ENCODE measurements at regions of chr3 and their contacts with region 1.

Region 1: DNA sequence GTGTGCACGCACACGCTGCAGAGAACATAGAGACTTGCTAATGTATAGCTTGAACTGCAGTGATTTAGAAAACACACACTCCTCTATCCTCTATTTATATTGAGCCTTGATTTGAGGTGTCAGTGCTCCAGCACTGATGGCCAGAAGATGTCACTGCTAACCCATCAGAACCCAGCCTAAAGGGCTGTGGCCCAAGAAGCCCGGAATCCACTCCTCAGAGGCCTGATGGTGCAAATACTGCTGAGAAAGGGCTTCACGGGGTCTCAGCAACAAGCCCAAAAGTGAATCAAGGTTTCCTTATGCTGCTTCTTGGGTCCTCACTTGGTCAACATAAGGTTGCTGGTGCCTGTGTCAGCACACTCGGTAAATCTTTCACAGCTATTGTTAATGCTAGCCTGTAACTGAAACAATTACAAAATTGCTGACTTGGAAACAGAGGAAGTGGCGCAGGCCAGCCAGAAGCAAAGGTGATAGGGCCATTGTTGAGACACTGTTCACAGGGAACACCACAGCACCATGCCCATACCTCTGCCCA is 60.3 kb downstream of the HEG1 start:
- DNase-seq: peak; percentile 51 to 81
- ATAC-seq: peak; percentile 90 to 98 (median 97)
- H3K4me3 ChIP-seq: no peak overlapping the region
- H3K4me3 Mint-ChIP-seq: no peak overlapping the region
- H3K27ac ChIP-seq: peak overlapping the region; percentile 42
- H3K27ac Mint-ChIP-seq: peak overlapping the region; percentile 69 to 83
- H3K4me1 ChIP-seq: peaks cover 12% of the 10 kb centered on the region
- H3K4me1 Mint-ChIP-seq: peaks cover 11 to 17% of the 10 kb centered on the region in 2 donors
- H3K27me3 ChIP-seq: no peaks in the 10 kb centered on the region
- H3K27me3 Mint-ChIP-seq: no peaks in the 10 kb centered on the region
- CTCF ChIP-seq: peak; percentile 75

Region 2: DNA sequence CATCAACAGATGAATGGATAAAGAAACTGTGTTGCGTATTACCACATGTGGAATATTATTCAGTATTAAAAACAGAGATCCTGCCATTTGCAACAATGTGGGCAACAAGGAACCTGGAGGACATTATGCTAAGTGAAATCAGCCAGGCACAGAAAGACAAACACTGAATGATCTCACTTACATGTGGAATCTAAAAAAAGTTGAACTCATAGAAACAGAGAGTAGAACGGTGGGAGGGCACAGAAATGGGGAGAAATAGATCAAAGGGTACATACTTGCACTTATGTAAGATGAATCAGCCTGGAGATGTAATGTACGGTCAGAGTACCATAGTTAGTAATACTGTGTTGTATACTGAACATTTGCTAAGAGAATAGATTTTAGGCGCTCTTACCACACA is 31.1 kb before region 1 on chr3:
- intact Hi-C with region 1: no loop called
- DNase-seq: no peak
- ATAC-seq: no peak
- H3K4me3 ChIP-seq: no peak overlapping the region
- H3K4me3 Mint-ChIP-seq: no peak overlapping the region
- H3K27ac ChIP-seq: no peak overlapping the region
- H3K27ac Mint-ChIP-seq: peak overlapping the region in 1 of 2 donors; percentile 5
- H3K4me1 ChIP-seq: no peaks in the 10 kb centered on the region
- H3K4me1 Mint-ChIP-seq: peaks cover 0 to 8% of the 10 kb centered on the region in 2 donors
- H3K27me3 ChIP-seq: no peaks in the 10 kb centered on the region
- H3K27me3 Mint-ChIP-seq: no peaks in the 10 kb centered on the region
- CTCF ChIP-seq: no peak

Region 3: DNA sequence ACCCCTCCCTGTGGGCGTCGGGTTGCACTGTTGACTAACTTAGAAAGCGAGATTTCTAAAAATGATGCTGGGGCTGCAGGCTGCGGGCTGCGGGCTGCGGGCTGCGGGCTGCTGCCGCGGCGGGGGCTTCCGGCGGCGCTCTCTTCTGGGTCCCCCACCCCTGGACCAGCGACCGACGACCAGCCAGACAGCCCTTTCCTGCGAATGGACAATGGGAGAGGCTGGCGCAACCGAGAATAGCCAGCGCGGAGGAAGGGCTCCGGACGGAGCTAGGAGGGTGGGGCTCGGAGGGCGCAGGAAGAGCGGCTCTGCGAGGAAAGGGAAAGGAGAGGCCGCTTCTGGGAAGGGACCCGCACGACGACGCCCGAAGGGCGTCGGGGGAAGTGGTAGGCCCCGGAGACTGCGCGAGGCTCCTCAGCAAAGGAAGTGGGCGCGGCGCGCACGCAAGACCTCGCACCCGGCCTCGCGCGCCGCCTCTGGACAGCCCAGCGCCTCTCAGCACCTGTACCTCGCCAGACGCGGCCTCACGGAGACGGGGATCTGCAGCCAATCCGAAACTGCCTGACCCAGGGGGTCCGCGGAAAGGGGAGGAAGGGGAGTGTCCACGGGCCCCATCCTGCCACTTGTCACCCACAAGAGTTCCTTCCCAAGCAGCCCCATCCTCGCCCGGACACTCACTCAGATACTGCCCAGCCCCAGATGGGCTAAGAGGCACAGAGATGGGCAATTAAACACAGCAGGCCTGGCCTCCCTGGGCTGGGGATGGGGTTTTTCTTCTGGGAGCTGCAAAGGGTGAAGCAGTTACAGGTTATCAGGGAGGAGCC is 146.3 kb after region 1 on chr3:
- intact Hi-C with region 1: loop called (anchors 1 kb)
- DNase-seq: peak; percentile 61 to 86
- ATAC-seq: peak; percentile 87 to 91 (median 91)
- H3K4me3 ChIP-seq: peak overlapping the region; percentile 29
- H3K4me3 Mint-ChIP-seq: peak overlapping the region; percentile 86
- H3K27ac ChIP-seq: peak overlapping the region; percentile 59
- H3K27ac Mint-ChIP-seq: peak overlapping the region; percentile 84 to 95
- H3K4me1 ChIP-seq: peaks cover 57% of the 10 kb centered on the region
- H3K4me1 Mint-ChIP-seq: peaks cover 46 to 66% of the 10 kb centered on the region in 2 donors
- H3K27me3 ChIP-seq: no peaks in the 10 kb centered on the region
- H3K27me3 Mint-ChIP-seq: no peaks in the 10 kb centered on the region
- CTCF ChIP-seq: peak; percentile 6

Region 4: GRCh38 chr3:125202197-125202596 is 206.7 kb after region 1 on chr3:
- intact Hi-C with region 1: loop called (anchors 1 kb)
- DNase-seq: peak in 1 of 2 donors; percentile 46
- ATAC-seq: peak in 2 of 3 donors; percentile 69 to 77
- H3K4me3 ChIP-seq: no peak overlapping the region
- H3K4me3 Mint-ChIP-seq: no peak overlapping the region
- H3K27ac ChIP-seq: no peak overlapping the region
- H3K27ac Mint-ChIP-seq: no peak overlapping the region
- H3K4me1 ChIP-seq: no peaks in the 10 kb centered on the region
- H3K4me1 Mint-ChIP-seq: no peaks in the 10 kb centered on the region
- H3K27me3 ChIP-seq: no peaks in the 10 kb centered on the region
- H3K27me3 Mint-ChIP-seq: no peaks in the 10 kb centered on the region
- CTCF ChIP-seq: peak; percentile 16

Region 5: DNA sequence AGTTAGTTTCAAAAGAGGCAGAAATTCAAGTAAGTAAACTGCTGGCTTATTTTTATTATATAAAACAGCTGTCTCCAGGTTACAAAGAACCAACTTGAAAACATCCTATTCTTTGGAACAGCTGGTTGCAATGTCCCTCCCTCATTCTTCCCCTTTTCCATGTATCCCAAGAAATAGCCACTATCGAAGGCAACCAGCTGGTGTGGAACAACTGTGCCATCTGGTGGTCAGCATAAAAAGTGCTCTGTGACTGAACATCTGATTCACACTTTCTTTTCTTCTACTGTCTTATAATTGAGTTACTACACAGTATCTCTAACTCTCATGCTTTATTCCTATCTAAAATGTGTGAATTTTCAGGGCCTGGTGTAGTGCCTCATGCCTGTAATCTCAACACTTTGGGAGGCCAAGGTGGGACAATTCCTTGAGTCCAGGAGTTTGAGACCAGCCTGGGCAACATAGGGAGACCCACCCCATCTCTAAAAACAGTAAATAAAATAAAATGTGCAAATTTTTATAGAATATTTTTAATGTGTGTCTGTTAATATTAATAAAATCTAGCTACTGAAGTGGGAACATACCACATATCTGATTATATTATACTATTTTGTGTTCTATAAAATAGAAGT is 590.2 kb after region 1 on chr3:
- intact Hi-C with region 1: loop called (anchors 2 kb)
- DNase-seq: peak in 1 of 2 donors; percentile 74
- ATAC-seq: peak; percentile 67 to 70 (median 68)
- H3K4me3 ChIP-seq: no peak overlapping the region
- H3K4me3 Mint-ChIP-seq: peak overlapping the region; percentile 13
- H3K27ac ChIP-seq: no peak overlapping the region
- H3K27ac Mint-ChIP-seq: no peak overlapping the region
- H3K4me1 ChIP-seq: peaks cover 8% of the 10 kb centered on the region
- H3K4me1 Mint-ChIP-seq: peaks cover 14 to 19% of the 10 kb centered on the region in 2 donors
- H3K27me3 ChIP-seq: no peaks in the 10 kb centered on the region
- H3K27me3 Mint-ChIP-seq: no peaks in the 10 kb centered on the region
- CTCF ChIP-seq: peak; percentile 82

Measured in natural killer cell (primary cell).